Activated naive CD4-positive, alpha-beta T cell treated with anti-CD3 and anti-CD28 coated beads, Interleukin-2, amount 10 ng/mL, durations not matched to agents 7 days and 5 days (primary cell): ENCODE measurements at regions of chr10 and their contacts with region 1.

Region 1: DNA sequence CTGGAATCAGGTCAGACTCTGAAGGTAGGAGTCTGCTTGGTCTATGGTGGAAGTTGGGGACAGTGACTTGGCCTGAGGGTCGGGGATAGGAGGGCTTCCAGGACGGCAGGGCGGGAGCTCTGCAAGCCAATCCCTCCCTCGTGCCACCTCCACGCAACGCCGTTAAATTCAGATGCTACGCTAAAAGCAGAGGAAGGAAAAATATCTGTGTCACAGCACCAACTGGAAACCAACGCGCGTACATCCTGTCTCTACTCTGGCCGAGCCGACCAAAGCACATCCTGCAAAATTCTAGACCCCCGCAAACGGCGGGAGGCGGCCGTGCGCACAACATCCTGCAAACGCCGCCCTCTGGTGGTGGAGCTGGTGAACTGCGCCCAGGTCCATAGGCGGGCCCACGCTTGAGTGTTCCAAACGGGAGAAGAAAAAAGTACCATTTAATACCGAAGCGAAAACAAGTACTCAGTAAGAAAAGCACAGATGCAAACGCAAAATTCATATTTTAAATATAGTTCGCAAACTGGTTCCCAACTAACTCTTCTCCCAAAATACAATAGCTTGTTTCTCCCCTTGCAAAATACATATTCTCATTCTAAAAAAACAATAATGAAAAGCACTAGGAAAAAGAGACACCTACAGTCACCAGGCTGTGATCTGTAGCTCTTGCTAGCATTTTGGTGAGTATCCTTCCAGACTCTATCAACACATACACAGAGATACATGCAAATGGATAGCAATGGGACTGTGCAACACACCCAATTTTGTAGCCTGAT is 45.7 kb upstream of the HSPA12A start:
- DNase-seq: peak; percentile 82
- H3K4me3 Mint-ChIP-seq: no peak overlapping the region
- H3K27ac Mint-ChIP-seq: no peak overlapping the region
- H3K4me1 Mint-ChIP-seq: peaks cover 12% of the 10 kb centered on the region
- H3K27me3 Mint-ChIP-seq: peaks cover 36% of the 10 kb centered on the region

Region 2: DNA sequence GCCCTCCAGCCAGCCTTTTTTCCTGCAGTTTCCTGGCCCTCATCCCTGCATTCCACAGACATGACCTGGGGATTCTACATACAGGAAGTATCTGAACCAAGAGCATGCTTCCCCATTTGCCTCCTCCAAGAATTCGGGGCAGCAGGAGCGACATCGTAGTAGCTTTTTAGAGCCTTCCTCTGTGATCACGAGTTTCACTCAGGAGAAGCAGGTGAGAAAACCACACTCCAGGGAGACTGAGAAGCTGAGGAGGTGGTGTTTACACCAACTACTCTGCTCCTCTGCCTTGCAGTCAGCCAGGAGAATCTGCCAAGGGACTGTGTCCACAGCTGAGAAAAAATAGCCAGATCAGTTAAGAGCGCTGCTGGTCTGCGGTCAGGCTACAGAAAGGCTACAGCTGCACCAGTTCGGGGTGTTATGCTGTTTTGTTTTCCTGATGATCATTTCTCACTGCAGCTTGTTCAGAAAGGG is 99.8 kb before region 1 on chr10:
- CTCF ChIA-PET with region 1: interaction called, 113 read pairs
- DNase-seq: no peak
- H3K4me3 Mint-ChIP-seq: no peak overlapping the region
- H3K27ac Mint-ChIP-seq: no peak overlapping the region
- H3K4me1 Mint-ChIP-seq: no peaks in the 10 kb centered on the region
- H3K27me3 Mint-ChIP-seq: peaks cover 60% of the 10 kb centered on the region

Region 3: DNA sequence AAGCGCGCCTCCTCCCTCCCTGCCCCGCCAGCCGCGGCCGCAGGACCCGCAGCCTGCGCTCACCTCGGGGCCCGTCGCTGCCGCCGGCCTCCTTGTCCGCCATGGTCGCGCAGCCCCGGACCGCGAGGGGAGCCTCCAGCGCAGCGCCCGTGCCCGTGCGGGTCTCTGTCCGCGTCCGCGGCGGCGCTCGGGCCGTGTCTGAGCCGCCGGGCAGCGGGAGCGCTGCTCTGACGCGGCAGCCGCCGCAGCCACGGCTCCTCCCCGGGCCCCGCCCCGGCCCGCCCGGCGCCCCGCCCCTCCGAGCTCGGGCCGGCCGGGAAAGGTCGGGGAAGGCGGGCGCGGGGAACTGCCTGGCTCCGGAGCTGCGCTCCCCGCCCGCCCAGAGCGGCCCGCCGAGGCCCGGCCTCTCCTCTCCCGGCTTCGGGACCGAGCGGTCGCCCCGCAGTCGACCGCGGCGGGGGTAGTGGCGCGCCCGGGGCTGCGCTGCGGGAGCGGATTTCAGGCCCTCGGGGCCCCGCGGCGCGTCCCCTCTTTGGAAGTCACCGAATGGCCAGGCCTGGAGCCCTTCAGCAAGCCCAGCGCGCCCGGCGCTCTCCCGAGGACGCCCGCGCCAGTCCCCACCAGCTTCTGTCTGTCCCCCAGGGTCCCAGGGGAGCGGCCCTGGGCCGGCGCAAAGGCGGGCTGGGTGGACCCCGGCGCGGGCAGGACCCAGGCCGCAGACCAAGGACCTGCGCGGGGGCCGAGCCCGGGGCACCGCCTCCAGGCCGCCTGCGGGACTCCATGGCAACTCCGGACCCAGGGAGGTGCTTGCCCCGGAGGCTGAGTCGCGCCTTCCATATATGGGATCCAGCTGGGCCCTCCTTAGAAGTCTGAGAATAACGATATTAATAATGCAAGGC is 45.5 kb before region 1 on chr10 and contains the start of gene HSPA12A:
- CTCF ChIA-PET with region 1: no interaction called
- DNase-seq: peak; percentile 56
- H3K4me3 Mint-ChIP-seq: peak within 1 kb of the TSS; percentile 31
- H3K27ac Mint-ChIP-seq: no peak within 1 kb of the TSS
- H3K4me1 Mint-ChIP-seq: peaks cover 4% of the 10 kb centered on the region
- H3K27me3 Mint-ChIP-seq: peaks cover 81% of the 10 kb centered on the region

Region 4: GRCh38 chr10:116753759-116754158 is 34.3 kb before region 1 on chr10:
- CTCF ChIA-PET with region 1: no interaction called
- DNase-seq: no peak
- H3K4me3 Mint-ChIP-seq: no peak overlapping the region
- H3K27ac Mint-ChIP-seq: no peak overlapping the region
- H3K4me1 Mint-ChIP-seq: no peaks in the 10 kb centered on the region
- H3K27me3 Mint-ChIP-seq: peaks cover 40% of the 10 kb centered on the region

Region 5: DNA sequence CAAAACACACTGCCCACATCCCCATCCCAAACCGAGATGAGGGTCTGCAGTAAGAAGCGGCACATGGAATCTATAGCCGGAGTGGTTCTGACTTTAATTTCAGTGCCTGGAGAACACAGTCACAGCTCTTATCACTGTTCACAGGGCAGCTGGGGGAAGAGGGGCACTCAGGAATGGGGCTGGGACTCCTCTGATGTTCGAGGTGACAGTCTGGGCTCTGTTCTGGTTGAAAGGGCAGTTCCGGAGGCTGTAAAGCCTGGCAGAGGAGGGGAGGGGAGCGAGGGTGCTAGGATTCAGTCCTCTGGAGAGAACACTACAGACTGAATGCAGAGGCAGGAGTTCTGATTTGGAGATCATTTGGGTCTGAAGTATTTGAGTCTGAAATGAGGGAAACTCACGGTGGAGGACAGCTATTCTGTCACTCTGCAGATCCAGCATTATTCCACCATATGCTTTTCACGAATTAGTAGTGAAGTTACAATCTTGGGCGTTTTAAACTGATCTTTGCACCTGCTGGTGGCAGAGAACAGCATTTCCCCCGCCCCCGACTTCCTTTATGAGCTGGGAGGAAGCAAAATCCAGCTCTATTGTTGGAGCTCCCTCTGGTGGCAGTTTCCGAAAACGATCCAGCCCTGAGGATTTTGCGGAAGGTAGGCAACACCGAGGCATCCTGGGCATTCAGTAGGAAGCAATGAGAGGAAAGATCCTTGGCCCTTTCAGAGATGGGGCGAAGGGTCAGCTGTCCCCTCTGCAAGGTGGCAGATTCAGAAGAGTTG is 386.5 kb after region 1 on chr10:
- CTCF ChIA-PET with region 1: interaction called, 37 read pairs
- DNase-seq: peak; percentile 86
- H3K4me3 Mint-ChIP-seq: peak overlapping the region; percentile 75
- H3K27ac Mint-ChIP-seq: no peak overlapping the region
- H3K4me1 Mint-ChIP-seq: peaks cover 18% of the 10 kb centered on the region
- H3K27me3 Mint-ChIP-seq: peaks cover 51% of the 10 kb centered on the region